ENCODE measurements at regions of chr7 and their contacts with region 1.

Region 1: DNA sequence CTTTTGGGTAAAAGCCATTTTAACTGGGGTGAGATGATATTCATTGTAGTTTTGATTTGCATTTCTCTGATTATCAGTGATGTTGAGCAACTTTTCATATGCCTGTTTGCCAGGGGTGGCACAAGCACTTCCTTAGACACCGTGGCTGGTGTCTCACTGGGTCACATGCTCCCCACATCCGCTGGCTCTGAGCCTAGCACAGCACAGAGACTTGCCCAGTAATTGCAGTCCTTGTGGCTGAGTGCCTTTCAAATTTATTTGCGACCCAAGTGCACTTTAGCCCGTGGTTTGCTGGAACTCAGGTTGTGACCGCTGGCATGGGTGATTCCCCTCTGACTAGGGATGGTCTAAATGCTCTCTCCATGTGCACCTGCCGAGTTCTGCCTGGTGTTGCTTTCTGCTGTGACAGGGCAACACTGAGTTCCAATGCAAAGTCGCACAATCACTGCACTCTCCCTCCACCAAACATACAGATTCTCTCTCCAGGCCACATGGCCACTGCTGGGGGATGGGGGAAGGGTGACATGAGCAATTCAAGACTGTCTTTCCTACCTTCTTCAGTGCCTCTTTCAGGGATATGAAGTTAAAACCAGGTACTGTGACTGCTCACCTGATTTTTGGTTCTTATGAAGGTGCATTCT is 66.5 kb downstream of the ZNF277 start:
- DNase-seq: peak in 3 of 35 experiments; percentile 2 to 7 (median 4)
- ATAC-seq: peak in 2 of 4 experiments; percentile 46 to 64
- H3K4me3 ChIP-seq: no peak overlapping the region
- H3K4me3 Mint-ChIP-seq: no peak overlapping the region
- H3K27ac ChIP-seq: no peak overlapping the region
- H3K27ac Mint-ChIP-seq: no peak overlapping the region
- H3K4me1 ChIP-seq: no peaks in the 10 kb centered on the region
- H3K4me1 Mint-ChIP-seq: peaks cover 17 to 30% (median 22%) of the 10 kb centered on the region in 3 donors
- H3K27me3 ChIP-seq: no peaks in the 10 kb centered on the region
- H3K27me3 Mint-ChIP-seq: no peaks in the 10 kb centered on the region

Region 2: DNA sequence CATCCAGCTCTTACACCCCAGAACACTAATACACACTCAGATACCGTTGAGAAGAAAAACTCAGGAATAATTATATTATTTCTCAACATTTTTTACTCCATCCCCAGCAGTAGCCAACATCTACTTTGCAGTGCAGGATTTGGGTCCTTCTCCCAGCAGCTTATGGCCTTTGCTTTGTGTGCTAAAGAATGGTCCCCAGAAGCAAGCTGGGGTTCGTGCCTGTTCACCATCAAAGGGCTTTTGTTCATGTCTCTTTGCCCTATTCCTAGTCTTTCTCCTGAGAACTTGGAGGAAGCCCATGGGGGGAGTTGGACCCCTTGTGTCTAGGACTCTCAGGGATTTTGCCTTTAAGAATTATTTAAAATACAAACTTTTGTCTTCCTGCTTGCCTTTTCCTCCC is 33.9 kb after region 1 on chr7:
- CTCF ChIA-PET with region 1: no interaction called
- POLR2A ChIA-PET with region 1: interaction called in 1 of 2 experiments, 11 read pairs
- DNase-seq: no peak
- ATAC-seq: no peak
- H3K4me3 ChIP-seq: no peak overlapping the region
- H3K4me3 Mint-ChIP-seq: no peak overlapping the region
- H3K27ac ChIP-seq: no peak overlapping the region
- H3K27ac Mint-ChIP-seq: no peak overlapping the region
- H3K4me1 ChIP-seq: peaks cover 0 to 2% of the 10 kb centered on the region in 2 experiments
- H3K4me1 Mint-ChIP-seq: peaks cover 8 to 10% (median 9%) of the 10 kb centered on the region in 3 donors
- H3K27me3 ChIP-seq: no peaks in the 10 kb centered on the region
- H3K27me3 Mint-ChIP-seq: no peaks in the 10 kb centered on the region

Measured in T-cell (primary cell).